ENCODE measurements at regions of chr2 and their contacts with region 1.

Region 1: DNA sequence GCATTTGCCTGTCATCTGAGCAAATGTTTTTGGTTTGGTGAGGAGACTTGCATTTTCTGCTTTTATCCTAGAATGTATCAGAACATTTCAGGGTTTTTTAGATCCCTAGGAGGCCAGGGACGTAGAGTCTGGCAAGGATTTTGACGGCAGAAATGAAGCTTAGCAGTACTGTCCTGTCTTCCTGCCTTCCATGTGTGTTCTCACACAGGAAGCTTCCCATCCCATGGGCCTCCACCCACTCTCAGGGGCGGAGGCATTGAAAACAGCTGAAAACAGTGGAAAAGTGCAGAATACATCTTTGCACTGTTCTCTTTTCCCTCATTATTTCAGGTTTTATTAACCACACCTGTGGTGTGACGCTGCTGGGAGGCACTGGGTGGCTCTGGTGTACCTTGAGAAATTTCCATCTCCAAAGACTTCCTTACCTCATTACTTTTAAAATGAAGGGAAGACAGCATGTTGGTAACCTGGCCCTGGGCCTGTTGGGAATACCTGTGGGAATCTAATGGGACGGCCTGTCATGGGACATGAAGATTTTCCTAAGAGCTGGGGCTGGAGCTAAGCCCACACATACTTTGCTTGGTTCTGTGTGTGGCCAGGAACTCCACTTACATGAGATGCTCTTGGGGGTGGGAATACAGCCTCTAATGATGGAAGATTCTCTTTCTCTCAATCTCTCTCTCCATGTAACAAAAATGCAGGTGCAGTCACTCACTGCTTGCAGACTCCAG is 20.5 kb downstream of the PCARE start:
- DNase-seq: no peak
- ATAC-seq: no peak
- H3K4me3 ChIP-seq: no peak overlapping the region
- H3K27ac ChIP-seq: no peak overlapping the region
- H3K4me1 ChIP-seq: no peaks in the 10 kb centered on the region
- H3K27me3 ChIP-seq: peaks cover 5 to 57% of the 10 kb centered on the region in 2 experiments; a peak in 3 of 5 replicates
- CTCF ChIP-seq: no peak
- EP300 ChIP-seq: no peak
- POLR2A ChIP-seq: no peak
- RAD21 ChIP-seq: no peak

Region 2: DNA sequence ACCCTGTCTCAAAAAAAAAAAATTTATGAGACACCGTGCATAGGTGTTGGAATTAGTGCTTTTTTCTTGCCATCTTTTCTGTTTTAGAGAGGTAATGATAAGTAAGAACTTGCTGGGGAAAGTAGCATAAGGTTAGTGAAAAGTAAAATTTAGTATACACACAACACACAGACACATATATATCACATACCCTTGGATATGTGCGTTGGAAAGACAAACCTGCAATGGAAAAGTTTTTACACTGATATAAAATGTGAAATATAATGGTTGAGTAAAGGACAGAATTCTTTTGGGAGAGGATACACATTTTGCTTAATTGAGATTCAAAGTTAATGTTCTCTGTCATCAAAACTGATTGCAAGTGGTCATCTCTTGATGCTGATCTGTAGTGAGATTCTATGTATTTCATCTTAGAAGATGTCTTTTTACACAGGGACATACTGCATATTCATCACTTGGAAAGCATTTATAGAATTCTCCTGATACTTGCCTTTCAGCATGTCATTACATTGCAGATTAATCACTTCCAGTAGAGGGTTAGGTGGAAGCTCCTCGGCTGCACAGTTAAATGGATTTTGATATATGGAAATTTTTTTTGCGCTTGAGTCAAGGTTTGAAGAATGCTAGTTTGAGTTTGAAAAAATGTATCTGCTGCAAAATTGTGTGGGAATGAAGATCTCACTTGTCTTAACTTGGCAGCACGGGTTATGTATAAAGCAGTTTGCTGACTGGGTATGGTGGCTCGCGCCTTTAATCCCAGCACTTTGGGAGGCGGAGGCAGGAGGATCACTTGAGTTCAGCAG is 288.7 kb before region 1 on chr2:
- CTCF ChIA-PET with region 1: no interaction called
- POLR2A ChIA-PET with region 1: no interaction called
- in situ Hi-C with region 1: no loop called
- intact Hi-C with region 1: no loop called
- DNase-seq: no peak
- ATAC-seq: no peak
- H3K4me3 ChIP-seq: no peak overlapping the region
- H3K27ac ChIP-seq: no peak overlapping the region
- H3K4me1 ChIP-seq: peaks cover 20% of the 10 kb centered on the region
- H3K27me3 ChIP-seq: no peaks in the 10 kb centered on the region
- CTCF ChIP-seq: no peak
- EP300 ChIP-seq: no peak
- POLR2A ChIP-seq: no peak
- RAD21 ChIP-seq: no peak

Region 3: GRCh38 chr2:29130295-29130694 is 76.5 kb after region 1 on chr2:
- CTCF ChIA-PET with region 1: no interaction called
- POLR2A ChIA-PET with region 1: no interaction called
- in situ Hi-C with region 1: no loop called
- intact Hi-C with region 1: no loop called
- DNase-seq: peak; percentile 35
- ATAC-seq: no peak
- H3K4me3 ChIP-seq: no peak overlapping the region
- H3K27ac ChIP-seq: peak overlapping the region; percentile 15
- H3K4me1 ChIP-seq: peaks cover 15% of the 10 kb centered on the region
- H3K27me3 ChIP-seq: no peaks in the 10 kb centered on the region
- CTCF ChIP-seq: no peak
- EP300 ChIP-seq: peak in 1 of 2 experiments; percentile 21; a peak in 1 of 4 replicates
- POLR2A ChIP-seq: no peak
- RAD21 ChIP-seq: no peak

Region 4: DNA sequence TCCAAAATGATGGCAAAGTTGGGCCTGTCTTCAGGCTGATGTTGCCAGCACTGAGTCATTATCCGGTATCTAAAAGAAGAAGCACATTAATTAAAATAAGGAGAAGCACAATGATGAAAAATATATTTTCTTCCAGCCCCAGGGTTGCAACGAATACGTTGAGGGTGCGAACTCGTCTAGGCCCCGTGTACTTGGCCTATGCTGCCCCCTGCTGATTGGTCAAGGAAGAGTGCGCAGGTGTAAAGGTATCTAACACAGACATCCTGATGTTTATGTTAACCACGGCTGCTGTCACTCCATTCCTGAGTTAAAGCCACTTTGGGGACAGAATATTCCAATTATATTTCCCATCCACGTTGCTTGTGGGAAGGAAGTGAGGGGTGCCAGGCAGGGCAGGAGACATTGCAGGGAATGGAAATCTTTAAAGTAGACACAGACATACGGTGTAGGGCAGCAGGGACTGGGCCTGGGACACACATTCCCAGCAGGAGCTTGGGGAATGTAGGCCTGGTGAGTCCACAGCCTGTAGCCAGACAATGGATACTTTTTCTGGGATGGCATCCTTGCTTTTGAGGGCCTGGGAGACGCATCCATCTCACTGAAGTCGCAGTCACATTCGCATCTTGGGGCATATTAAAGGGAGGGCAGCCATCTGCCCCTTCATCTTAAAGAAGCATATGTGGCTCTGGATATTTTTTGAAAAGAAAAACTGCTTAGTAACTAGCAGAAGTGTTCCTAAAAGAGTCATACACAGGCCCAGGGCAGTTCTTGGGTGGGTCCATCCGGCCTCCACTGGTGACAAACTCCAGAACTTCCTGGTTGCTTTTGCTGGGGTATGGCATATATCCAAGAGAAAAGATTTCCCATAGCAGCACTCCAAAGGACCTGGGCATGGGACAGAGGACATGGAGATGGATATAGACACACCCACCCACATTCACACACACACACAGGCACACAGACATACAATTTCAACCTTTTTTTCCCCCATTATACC is 143.3 kb after region 1 on chr2:
- CTCF ChIA-PET with region 1: no interaction called
- POLR2A ChIA-PET with region 1: no interaction called
- in situ Hi-C with region 1: no loop called
- intact Hi-C with region 1: loop called (anchors 2 kb)
- DNase-seq: peak; percentile 69
- ATAC-seq: peak; percentile 99
- H3K4me3 ChIP-seq: no peak overlapping the region
- H3K27ac ChIP-seq: no peak overlapping the region
- H3K4me1 ChIP-seq: no peaks in the 10 kb centered on the region
- H3K27me3 ChIP-seq: peaks cover 0 to 16% of the 10 kb centered on the region in 2 experiments; a peak in 3 of 5 replicates
- CTCF ChIP-seq: peak; percentile 94
- EP300 ChIP-seq: no peak
- POLR2A ChIP-seq: no peak
- RAD21 ChIP-seq: peak; percentile 93

Measured in HepG2 (cell line).